Keratinocyte (primary cell): ENCODE measurements at regions of chr6 and their contacts with region 1.

Region 1: DNA sequence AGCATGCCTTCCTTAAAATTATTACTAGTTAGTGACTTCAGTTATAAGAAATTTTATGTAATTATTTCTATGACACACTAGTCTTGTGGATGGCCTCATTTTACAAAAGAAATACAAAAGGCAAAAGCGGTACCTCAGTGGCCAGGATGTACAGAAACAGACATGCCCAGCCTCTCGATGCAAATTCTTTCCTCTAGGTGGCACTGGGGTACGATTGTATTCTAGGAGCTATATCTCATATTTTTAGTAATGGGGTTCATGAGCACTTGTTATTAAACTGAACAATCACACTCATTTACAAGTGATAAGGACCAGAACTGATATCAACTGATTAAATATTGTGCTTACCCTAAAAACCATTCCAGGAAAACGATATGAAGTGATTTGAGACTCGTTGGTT is 59.8 kb downstream of the SOD2 start:
- DNase-seq: no peak
- H3K4me3 ChIP-seq: no peak overlapping the region
- H3K27ac ChIP-seq: no peak overlapping the region
- H3K4me1 ChIP-seq: no peaks in the 10 kb centered on the region
- H3K27me3 ChIP-seq: no peaks in the 10 kb centered on the region
- CTCF ChIP-seq: peak; percentile 32 to 55 (median 51)

Region 2: DNA sequence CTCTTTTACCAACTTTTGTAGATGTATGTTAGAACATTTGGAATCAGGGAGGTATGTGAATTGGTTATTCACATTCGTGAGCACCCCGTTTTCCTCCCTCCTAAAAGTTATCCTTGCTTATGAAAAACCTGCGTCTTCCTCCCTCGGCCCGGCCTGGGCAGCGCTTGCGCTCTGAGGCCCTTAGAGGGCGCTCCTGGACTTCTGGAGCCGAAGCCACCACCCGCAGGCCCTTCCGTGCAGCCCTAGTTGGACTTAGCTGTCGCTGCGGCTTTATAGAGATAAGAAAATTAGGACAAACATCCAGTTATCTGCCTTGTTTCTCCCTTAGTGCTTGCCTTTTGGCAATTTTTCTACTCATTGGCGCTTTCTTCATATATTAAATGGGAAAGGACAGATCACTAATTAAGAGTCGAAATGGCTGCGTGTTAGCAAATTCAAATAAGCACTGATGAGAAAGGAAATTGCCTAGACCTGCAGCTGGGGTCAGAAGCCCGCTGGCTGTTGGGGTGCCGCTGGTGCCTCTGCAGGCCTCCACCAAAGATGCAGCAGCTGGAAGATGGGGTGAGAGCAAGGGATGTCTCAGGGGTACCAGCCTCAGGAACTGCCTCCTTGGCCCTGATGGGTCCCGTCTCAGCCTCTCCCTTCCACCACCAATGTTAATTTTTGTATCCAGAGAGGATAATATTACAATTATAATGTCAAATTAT is 458.8 kb before region 1 on chr6:
- dilution Hi-C with region 1: loop called (anchors 25 kb)
- DNase-seq: no peak
- H3K4me3 ChIP-seq: no peak overlapping the region
- H3K27ac ChIP-seq: no peak overlapping the region
- H3K4me1 ChIP-seq: peaks cover 2% of the 10 kb centered on the region
- H3K27me3 ChIP-seq: peaks cover 24% of the 10 kb centered on the region
- CTCF ChIP-seq: peak; percentile 80 to 99 (median 97)